B cell (primary cell): ENCODE measurements at regions of chr11 and their contacts with region 1.

Region 1: GRCh38 chr11:59550368-59550841 is 39.1 kb downstream of the OR4D9 start:
- DNase-seq: peak; percentile 94
- ATAC-seq: peak; percentile 90
- H3K4me3 ChIP-seq: peak overlapping the region; percentile 46 to 87 (median 76)
- H3K4me3 Mint-ChIP-seq: peak overlapping the region; percentile 88
- H3K27ac ChIP-seq: peak overlapping the region; percentile 35 to 54
- H3K27ac Mint-ChIP-seq: peak overlapping the region; percentile 92
- H3K4me1 ChIP-seq: peaks cover 9 to 17% of the 10 kb centered on the region in 2 donors
- H3K4me1 Mint-ChIP-seq: peaks cover 29% of the 10 kb centered on the region
- H3K27me3 ChIP-seq: no peaks in the 10 kb centered on the region
- H3K27me3 Mint-ChIP-seq: no peaks in the 10 kb centered on the region
- CTCF ChIP-seq: peak; percentile 68

Region 2: DNA sequence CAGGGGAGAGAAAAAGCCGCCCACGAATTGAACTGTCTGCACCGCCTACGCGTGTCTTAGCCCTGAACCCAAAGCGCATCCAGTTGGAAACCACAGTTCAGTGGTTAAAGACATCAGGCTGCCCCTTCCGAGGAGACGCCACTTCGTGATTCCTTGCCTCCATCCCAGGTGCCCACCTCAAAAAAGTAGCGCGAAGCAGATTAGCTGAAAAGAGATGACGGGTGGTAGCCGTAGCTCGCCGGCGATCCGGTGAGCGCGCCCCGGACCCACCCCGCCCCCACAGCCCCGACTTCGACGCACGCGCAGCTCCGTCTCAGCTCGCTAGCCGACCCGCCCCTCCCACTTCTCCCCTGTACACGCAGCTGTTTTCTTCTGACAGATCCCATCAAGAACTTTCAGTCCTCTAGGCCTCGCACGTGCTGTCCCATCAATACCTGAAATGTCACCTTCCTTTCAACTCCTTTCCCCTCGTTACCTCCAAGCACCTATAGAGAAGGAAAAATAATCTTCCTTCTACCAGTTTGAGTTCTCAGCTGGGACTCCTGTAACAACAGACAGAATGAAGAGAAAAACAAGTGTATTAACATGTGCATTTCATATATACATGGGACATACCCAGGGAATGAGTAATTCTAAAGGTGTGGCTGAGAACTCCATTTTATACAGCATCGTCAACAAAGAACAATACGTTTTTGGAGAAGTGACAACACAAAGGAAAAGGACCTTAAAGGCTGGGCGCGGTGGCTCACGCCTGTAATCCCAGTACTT is 10.5 kb after region 1 on chr11:
- CTCF ChIA-PET with region 1: interaction called, 18 read pairs
- POLR2A ChIA-PET with region 1: interaction called, 4 read pairs
- intact Hi-C with region 1: loop called (anchors 1 kb)
- DNase-seq: peak; percentile 92
- ATAC-seq: peak; percentile 79
- H3K4me3 ChIP-seq: peak overlapping the region; percentile 84 to 98 (median 92)
- H3K4me3 Mint-ChIP-seq: peak overlapping the region; percentile 95
- H3K27ac ChIP-seq: peak overlapping the region; percentile 72 to 84
- H3K27ac Mint-ChIP-seq: peak overlapping the region; percentile 98
- H3K4me1 ChIP-seq: peaks cover 22 to 49% of the 10 kb centered on the region in 2 donors
- H3K4me1 Mint-ChIP-seq: peaks cover 44% of the 10 kb centered on the region
- H3K27me3 ChIP-seq: peaks cover 0 to 3% (median 1%) of the 10 kb centered on the region in 4 experiments
- H3K27me3 Mint-ChIP-seq: no peaks in the 10 kb centered on the region
- CTCF ChIP-seq: no peak

Region 3: DNA sequence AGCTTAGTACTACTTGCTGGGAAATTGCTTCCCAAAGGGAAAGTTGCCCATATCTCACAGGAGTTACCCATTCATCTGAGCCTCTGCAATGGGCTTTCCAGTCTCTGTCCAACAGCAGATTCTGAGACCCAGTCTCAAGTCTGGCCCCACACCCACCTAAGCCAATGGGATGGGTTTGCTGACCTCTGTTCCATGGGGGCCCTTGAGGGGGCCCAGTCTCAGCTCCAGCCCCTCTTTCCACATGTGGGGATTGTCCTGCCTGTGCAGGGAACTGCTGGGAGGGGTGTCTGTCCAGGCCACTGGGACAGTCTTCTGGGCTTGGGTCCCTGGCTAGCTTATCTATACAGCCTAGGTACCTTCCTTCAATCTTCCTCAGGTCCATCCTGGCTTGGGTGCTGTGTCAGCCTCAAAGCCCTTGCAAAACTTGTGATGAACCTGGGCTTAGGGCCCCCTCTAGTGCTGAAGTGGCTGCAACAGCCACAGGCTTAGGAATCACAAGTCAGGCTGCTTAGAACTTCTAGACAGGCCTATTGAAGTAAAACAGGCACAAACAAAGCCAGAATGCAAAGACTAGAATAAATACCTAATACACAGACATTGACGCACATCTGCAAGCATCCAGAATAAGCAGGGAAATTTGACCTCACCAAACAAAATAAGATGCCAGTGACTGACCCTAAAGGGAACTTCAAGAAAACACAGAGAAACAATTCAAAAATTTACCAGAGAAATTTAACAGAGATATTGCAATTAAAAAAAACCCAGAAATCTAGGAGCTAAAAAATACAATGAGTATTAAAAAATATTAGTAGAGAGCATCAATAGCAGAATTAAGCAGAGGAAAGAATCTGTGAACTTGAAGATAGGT is 130.1 kb after region 1 on chr11:
- CTCF ChIA-PET with region 1: interaction called, 3 read pairs
- POLR2A ChIA-PET with region 1: no interaction called
- intact Hi-C with region 1: loop called (anchors 5 kb)
- DNase-seq: peak; percentile 71
- ATAC-seq: peak; percentile 91
- H3K4me3 ChIP-seq: no peak overlapping the region
- H3K4me3 Mint-ChIP-seq: no peak overlapping the region
- H3K27ac ChIP-seq: no peak overlapping the region
- H3K27ac Mint-ChIP-seq: no peak overlapping the region
- H3K4me1 ChIP-seq: no peaks in the 10 kb centered on the region
- H3K4me1 Mint-ChIP-seq: no peaks in the 10 kb centered on the region
- H3K27me3 ChIP-seq: peaks cover 0 to 6% (median 0%) of the 10 kb centered on the region in 4 experiments
- H3K27me3 Mint-ChIP-seq: peaks cover 16% of the 10 kb centered on the region
- CTCF ChIP-seq: peak; percentile 68

Region 4: GRCh38 chr11:59810189-59810910 is 259.9 kb after region 1 on chr11 and contains the start of gene MRPL16:
- CTCF ChIA-PET with region 1: no interaction called
- POLR2A ChIA-PET with region 1: no interaction called
- intact Hi-C with region 1: loop called (anchors 5 kb)
- DNase-seq: peak; percentile 94
- ATAC-seq: peak; percentile 98
- H3K4me3 ChIP-seq: peak within 1 kb of the TSS; percentile 72 to 95 (median 82)
- H3K4me3 Mint-ChIP-seq: peak within 1 kb of the TSS; percentile 93
- H3K27ac ChIP-seq: peak within 1 kb of the TSS; percentile 61 to 76
- H3K27ac Mint-ChIP-seq: peak within 1 kb of the TSS; percentile 85
- H3K4me1 ChIP-seq: peaks cover 10 to 18% of the 10 kb centered on the region in 2 donors
- H3K4me1 Mint-ChIP-seq: peaks cover 14% of the 10 kb centered on the region
- H3K27me3 ChIP-seq: no peaks in the 10 kb centered on the region
- H3K27me3 Mint-ChIP-seq: peaks cover 7% of the 10 kb centered on the region
- CTCF ChIP-seq: peak; percentile 52
- total RNA-seq, gene MRPL16: 38.3 and 38.9 TPM in 2 replicates